Right lobe of liver (tissue), 6 donors: ENCODE measurements at regions of chr7 and their contacts with region 1.

Region 1: GRCh38 chr7:127708788-127709187 is 56.8 kb downstream of the SND1 start:
- DNase-seq: peak in 2 of 3 donors; percentile 21 to 62
- ATAC-seq: peak; percentile 81 to 95 (median 84)
- H3K4me3 ChIP-seq: no peak overlapping the region
- H3K27ac ChIP-seq: no peak overlapping the region
- H3K4me1 ChIP-seq: no peaks in the 10 kb centered on the region
- H3K27me3 ChIP-seq: no peaks in the 10 kb centered on the region
- CTCF ChIP-seq: peak; percentile 70 to 79 (median 74)
- POLR2A ChIP-seq: no peak

Region 2: GRCh38 chr7:127844707-127845331 is 136.0 kb after region 1 on chr7:
- intact Hi-C with region 1: no loop called
- DNase-seq: peak in 2 of 3 donors; percentile 42 to 63
- ATAC-seq: peak; percentile 76 to 93 (median 91)
- H3K4me3 ChIP-seq: no peak overlapping the region
- H3K27ac ChIP-seq: peak overlapping the region in 1 of 3 donors; percentile 8
- H3K4me1 ChIP-seq: peaks cover 0 to 24% (median 3%) of the 10 kb centered on the region in 4 donors
- H3K27me3 ChIP-seq: no peaks in the 10 kb centered on the region
- CTCF ChIP-seq: no peak
- POLR2A ChIP-seq: no peak

Region 3: GRCh38 chr7:128201051-128201689 is 492.4 kb after region 1 on chr7:
- intact Hi-C with region 1: loop called (anchors 5 to 10 kb)
- DNase-seq: peak in 1 of 3 donors; percentile 43
- ATAC-seq: peak in 1 of 4 donors; percentile 4
- H3K4me3 ChIP-seq: no peak overlapping the region
- H3K27ac ChIP-seq: no peak overlapping the region
- H3K4me1 ChIP-seq: no peaks in the 10 kb centered on the region
- H3K27me3 ChIP-seq: no peaks in the 10 kb centered on the region
- CTCF ChIP-seq: no peak
- POLR2A ChIP-seq: no peak

Region 4: GRCh38 chr7:128209229-128210035 is 500.6 kb after region 1 on chr7:
- intact Hi-C with region 1: loop called (anchors 5 to 10 kb)
- DNase-seq: peak; percentile 58 to 78 (median 72)
- ATAC-seq: peak; percentile 93 to 98 (median 96)
- H3K4me3 ChIP-seq: no peak overlapping the region
- H3K27ac ChIP-seq: no peak overlapping the region
- H3K4me1 ChIP-seq: no peaks in the 10 kb centered on the region
- H3K27me3 ChIP-seq: no peaks in the 10 kb centered on the region
- CTCF ChIP-seq: peak; percentile 94 to 97 (median 96)
- POLR2A ChIP-seq: no peak